Keratinocyte (primary cell): ENCODE measurements at regions of chr2 and their contacts with region 1.

Region 1: GRCh38 chr2:143162123-143162837 is 33.1 kb downstream of the ARHGAP15 start:
- DNase-seq: no peak
- H3K4me3 ChIP-seq: no peak overlapping the region
- H3K27ac ChIP-seq: no peak overlapping the region
- H3K4me1 ChIP-seq: no peaks in the 10 kb centered on the region
- H3K27me3 ChIP-seq: peaks cover 7% of the 10 kb centered on the region
- CTCF ChIP-seq: peak; percentile 48 to 79 (median 75)

Region 2: DNA sequence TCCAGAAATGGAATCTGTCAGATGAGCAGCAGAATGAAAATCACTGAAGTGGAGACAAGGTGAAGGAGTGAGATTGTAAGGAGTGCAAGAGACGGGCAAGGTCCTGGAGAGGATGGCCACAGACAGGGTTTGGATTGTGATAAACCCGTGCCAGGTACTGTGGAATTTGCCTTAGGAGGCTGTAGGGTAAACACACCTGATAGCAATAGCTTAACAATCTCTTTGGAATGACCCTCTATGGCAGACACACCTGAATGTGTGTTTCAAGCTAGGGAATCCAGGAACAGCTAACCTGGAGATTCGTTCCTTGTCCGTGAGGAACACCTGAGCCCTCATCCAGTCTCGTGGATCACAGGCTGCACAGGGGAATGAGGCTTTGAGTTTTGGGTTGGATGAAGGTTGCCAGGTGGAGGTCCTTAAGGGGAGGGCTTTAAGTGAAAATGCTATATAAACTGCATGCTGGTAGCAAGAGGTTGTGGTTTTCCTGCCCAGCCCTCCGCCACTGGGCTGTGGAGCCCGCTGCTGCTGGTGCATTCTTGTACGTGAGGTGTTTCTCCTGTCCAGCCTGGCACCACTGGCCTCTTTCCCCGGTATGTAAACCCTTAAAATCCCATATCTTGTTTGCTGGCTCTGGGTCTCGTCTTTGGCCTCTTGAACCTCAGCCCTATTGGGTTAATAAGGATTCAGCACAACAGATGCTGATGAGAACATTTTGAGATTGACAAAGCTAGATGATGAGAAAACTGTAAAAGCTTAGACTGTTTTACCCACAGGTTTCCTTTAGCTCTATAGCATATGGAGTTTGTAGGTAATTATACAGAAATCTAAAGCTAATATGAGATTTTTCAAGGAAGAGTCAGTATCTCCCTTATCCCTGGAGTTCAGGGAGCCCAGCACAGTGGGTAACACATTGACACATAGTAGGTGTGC is 84.8 kb after region 1 on chr2:
- dilution Hi-C with region 1: loop called (anchors 10 kb)
- DNase-seq: no peak
- H3K4me3 ChIP-seq: no peak overlapping the region
- H3K27ac ChIP-seq: no peak overlapping the region
- H3K4me1 ChIP-seq: no peaks in the 10 kb centered on the region
- H3K27me3 ChIP-seq: peaks cover 3% of the 10 kb centered on the region
- CTCF ChIP-seq: no peak

Region 3: GRCh38 chr2:143296089-143296488 is 133.8 kb after region 1 on chr2:
- dilution Hi-C with region 1: no loop called
- DNase-seq: no peak
- H3K4me3 ChIP-seq: no peak overlapping the region
- H3K27ac ChIP-seq: no peak overlapping the region
- H3K4me1 ChIP-seq: no peaks in the 10 kb centered on the region
- H3K27me3 ChIP-seq: no peaks in the 10 kb centered on the region
- CTCF ChIP-seq: no peak